Dorsolateral prefrontal cortex (tissue), 120 donors: ENCODE measurements at regions of chr15 and their contacts with region 1.

Region 1: DNA sequence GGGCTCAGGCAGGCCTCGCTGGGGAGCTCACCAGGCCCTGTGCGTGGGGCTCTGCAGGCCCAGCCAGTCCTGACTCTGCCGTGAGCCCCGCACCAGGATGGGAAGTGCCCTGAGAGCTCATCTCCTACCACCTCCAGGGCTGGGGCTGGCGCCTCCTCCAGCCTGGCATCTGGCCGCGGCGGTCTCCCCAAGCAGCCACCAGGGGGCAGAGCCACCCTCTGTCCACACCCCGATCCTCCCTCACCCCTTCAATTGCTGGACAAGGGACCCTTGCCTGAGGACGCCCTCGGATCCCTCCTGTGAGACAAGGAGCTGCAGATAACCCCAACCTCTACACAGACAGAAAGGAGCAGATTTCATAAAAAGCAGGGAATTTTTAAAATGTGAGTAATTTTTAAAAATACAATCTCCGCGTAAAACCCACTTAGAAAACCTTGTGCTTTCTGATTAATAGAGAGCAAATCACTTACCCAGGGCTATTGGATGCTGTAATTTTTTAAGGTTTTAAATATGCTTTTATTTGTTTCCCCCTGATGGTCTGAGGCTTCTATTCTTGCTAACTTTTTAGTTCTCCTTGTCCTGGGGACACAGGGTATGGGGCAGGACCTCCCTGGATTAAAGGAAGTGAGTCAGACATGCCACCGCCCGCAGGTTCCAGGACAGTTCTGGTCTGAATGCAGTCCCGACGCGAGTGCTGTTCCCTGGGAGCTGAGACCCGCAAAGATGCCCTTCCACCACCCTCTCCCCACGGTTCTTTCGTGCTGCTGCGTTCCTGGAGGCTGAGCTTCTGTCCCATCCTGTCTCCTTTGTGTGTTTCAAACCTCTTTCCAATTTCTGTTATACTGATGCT is 52.3 kb upstream of the CHRNA7 start:
- DNase-seq: peak in 9 of 10 donors; percentile 53 to 82 (median 65)
- H3K4me3 ChIP-seq: peak overlapping the region in 1 of 59 donors; percentile 23
- H3K27ac ChIP-seq: no peak overlapping the region
- H3K27me3 ChIP-seq: peaks cover 0 to 23% (median 0%) of the 10 kb centered on the region in 45 donors
- CTCF ChIP-seq: peak in 55 of 56 donors; percentile 76 to 99 (median 92)

Region 2: DNA sequence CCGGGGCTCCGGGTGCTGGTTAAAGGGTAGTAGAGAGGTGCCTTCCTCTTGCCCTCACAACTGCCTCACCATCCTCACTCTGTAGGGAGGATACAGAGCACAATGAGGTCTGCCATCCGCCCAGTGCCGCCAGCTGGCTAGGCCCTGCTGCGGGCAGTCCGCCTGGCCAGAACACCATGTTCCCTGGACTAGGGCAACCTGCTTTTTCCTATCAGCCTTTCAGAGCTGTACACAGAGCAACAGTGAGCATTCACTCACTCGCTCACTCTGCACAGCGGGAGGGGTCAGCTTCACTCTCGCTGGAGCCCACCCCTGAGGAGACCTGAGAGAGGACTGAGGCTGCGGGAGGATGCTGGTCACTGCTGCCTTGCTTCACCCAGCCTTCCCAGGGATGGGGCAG is 166.4 kb before region 1 on chr15:
- intact Hi-C with region 1: no loop called
- DNase-seq: peak; percentile 65 to 88 (median 80)
- H3K4me3 ChIP-seq: peak overlapping the region in 3 of 59 donors; percentile 3 to 13 (median 12)
- H3K27ac ChIP-seq: peak overlapping the region; percentile 30 to 98 (median 89)
- H3K27me3 ChIP-seq: no peaks in the 10 kb centered on the region
- CTCF ChIP-seq: peak in 18 of 56 donors; percentile 6 to 47 (median 18)

Region 3: GRCh38 chr15:31887246-31887645 is 90.8 kb before region 1 on chr15:
- intact Hi-C with region 1: loop called in 1 of 2 experiments (anchors 5 kb)
- DNase-seq: no peak
- H3K4me3 ChIP-seq: peak overlapping the region in 41 of 59 donors; percentile 1 to 50 (median 25)
- H3K27ac ChIP-seq: no peak overlapping the region
- H3K27me3 ChIP-seq: no peaks in the 10 kb centered on the region
- CTCF ChIP-seq: peak in 37 of 56 donors; percentile 7 to 64 (median 31)

Region 4: GRCh38 chr15:32029862-32030781 is 52.1 kb after region 1 on chr15 and contains the start of gene CHRNA7:
- intact Hi-C with region 1: loop called (anchors 5 kb)
- DNase-seq: peak; percentile 38 to 76 (median 62)
- H3K4me3 ChIP-seq: peak within 1 kb of the TSS; percentile 43 to 82 (median 73)
- H3K27ac ChIP-seq: peak within 1 kb of the TSS in 29 of 59 donors; percentile 7 to 82 (median 46)
- H3K27me3 ChIP-seq: peaks cover 0 to 2% (median 0%) of the 10 kb centered on the region in 45 donors
- CTCF ChIP-seq: peak in 45 of 56 donors; percentile 4 to 63 (median 36)
- total RNA-seq, gene CHRNA7: 2.8 to 31.7 (median 12.7) TPM

Region 5: DNA sequence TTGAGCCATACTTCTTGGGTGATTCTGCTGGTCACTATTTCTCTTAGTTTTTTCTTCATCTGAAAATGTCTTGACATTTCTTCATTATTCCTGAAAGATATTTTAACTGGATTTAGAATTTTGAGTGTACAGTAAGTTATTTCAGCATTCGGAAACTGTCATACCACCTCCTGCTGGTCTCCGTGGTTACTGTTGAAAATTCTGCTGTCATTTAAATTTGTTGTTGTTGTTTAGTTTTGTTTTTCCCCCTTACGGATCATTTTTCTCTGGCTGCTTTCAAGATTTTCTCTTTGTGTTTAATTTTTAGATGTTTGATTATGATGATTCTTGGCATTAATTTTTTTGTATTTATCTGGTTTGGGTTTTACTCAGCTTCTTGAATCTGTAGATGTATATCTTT is 152.8 kb after region 1 on chr15:
- intact Hi-C with region 1: no loop called
- DNase-seq: no peak
- H3K4me3 ChIP-seq: no peak overlapping the region
- H3K27ac ChIP-seq: no peak overlapping the region
- H3K27me3 ChIP-seq: peaks cover 0 to 6% (median 0%) of the 10 kb centered on the region in 45 donors
- CTCF ChIP-seq: no peak